Activated B cell treated with CpG ODN at 0.5 μM for 24 hours (primary cell): ENCODE measurements at regions of chr3 and their contacts with region 1.

Region 1: GRCh38 chr3:40309418-40309924 is at the start of gene EIF1B:
- DNase-seq: peak; percentile 99
- ATAC-seq: peak; percentile 88
- H3K4me3 Mint-ChIP-seq: peak within 1 kb of the TSS; percentile 99
- H3K27ac Mint-ChIP-seq: peak within 1 kb of the TSS; percentile 99
- H3K4me1 Mint-ChIP-seq: peaks cover 35% of the 10 kb centered on the region
- H3K27me3 Mint-ChIP-seq: no peaks in the 10 kb centered on the region
- CTCF ChIP-seq: no peak
- total RNA-seq, gene EIF1B: 62.0 and 65.5 TPM in 2 replicates

Region 2: DNA sequence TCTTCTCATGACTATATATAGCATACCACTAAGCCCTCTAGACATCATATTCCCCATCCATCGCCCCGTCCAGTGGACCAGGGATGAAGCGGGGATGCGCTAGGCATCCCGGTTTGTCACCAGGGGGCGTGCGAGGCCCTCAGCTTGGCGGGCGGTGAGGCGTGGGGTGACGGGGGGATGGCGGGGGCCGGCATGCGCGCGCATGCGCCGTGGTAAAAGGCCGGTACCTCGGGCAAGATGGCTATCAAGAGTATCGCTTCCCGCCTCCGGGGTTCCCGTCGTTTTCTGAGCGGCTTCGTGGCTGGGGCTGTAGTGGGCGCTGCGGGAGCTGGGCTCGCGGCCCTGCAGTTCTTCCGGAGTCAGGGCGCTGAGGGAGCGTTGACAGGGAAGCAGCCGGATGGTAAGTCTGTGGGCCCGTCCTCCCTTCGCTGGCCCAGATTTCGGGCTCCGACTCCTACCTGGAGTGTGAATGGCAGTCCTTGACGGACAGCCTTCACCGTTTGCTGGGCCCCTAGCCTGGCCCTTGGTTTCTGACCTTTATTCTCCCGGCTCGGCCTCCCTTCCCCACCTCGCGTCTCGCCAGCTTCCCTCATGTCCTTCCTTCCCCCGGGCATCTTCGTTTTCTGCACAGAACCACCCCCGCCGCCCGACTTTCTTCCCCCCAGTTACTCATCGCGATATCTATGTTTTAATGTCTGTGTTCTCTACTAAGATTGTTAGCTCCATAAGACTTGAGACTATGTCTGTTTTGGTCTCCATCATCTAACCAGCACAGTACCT is 1813.2 kb before region 1 on chr3 and contains the start of gene EXOG:
- CTCF ChIA-PET with region 1: no interaction called
- POLR2A ChIA-PET with region 1: no interaction called
- intact Hi-C with region 1: loop called (anchors 5 kb)
- DNase-seq: peak; percentile 88
- ATAC-seq: peak; percentile 96
- H3K4me3 Mint-ChIP-seq: peak within 1 kb of the TSS; percentile 98
- H3K27ac Mint-ChIP-seq: peak within 1 kb of the TSS; percentile 88
- H3K4me1 Mint-ChIP-seq: peaks cover 8% of the 10 kb centered on the region
- H3K27me3 Mint-ChIP-seq: no peaks in the 10 kb centered on the region
- CTCF ChIP-seq: peak; percentile 97
- total RNA-seq, gene EXOG: 26.8 and 32.3 TPM in 2 replicates

Region 3: DNA sequence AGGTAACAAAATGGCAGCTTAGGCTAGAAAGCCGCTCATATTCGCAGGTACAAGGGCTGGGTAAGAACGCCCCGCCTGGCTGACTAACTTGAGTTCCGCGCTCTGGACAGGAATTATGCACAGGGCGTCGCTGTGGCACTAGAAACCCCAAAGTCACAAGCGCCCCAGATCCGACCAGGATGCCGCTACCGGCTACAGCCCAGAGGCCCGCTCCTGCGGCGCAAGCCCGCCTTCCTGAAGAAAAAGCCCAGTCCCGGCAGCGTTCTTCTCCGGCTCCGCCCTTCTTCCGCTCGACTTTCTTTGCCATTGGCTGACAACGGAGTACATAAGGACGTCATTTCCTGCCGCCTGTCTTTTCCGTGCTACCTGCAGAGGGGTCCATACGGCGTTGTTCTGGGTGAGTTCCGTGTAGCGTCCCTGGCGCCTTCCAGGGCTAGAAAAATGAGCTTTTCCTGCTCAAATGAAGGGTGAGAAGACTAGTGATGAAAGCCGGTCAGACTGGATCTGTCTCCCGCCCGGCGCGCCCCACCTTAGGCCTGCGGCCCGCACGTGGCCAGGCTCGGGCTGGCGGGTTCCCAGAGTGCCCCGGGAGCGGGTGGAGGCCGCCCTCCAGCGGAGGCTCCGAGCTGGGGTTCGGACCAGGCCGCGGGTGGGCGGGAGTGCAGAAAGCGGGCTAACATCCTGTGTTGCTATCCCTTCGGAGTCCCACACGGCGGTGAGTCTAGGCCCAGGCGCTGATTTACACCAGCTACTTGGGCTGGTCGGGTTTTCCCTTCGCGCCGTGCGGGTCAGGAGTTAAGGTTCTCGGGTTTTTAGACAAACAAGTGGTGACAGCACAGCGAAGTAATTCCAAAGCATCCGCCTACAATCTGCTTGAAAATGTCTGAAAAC is 902.9 kb before region 1 on chr3 and contains the start of gene RPSA:
- CTCF ChIA-PET with region 1: no interaction called
- POLR2A ChIA-PET with region 1: no interaction called
- intact Hi-C with region 1: loop called (anchors 1 kb)
- DNase-seq: peak; percentile 80
- ATAC-seq: peak; percentile 90
- H3K4me3 Mint-ChIP-seq: peak within 1 kb of the TSS; percentile 94
- H3K27ac Mint-ChIP-seq: peak within 1 kb of the TSS; percentile 96
- H3K4me1 Mint-ChIP-seq: peaks cover 48% of the 10 kb centered on the region
- H3K27me3 Mint-ChIP-seq: no peaks in the 10 kb centered on the region
- CTCF ChIP-seq: no peak
- total RNA-seq, gene RPSA: 2,697 and 2,952 TPM in 2 replicates

Region 4: DNA sequence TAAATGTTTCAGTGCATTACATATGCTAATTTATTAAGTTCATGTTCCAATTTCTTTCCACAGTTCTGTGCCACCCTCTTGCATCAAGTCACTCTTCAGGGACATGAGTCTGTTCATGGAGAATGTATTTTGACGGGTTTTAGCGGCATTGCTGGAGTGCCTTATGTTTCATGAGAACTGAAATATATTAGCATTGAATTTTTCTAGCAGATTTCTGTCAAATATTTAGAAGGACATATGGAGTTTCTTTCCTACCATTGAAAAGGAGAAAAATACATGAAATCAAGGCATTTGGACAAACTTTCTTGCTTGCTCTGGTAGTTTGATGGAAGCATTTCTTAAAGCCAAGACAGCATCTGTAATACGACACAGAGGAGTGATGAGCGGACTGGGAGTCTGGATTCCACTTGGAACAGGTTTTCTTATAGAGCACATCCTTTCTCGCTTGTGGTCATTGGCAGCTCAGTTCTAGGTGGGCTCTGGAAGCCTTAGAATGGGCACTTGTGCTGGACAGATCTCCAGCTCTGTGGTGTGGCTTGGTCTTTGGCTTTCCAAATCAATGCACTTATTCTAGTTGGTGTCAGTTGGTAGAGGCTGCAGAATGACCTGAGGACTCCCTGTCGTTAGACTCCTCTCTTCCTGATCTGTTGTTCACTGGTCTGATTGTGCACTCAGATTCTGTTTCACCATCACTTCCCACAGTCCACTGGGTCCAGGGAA is 84.5 kb before region 1 on chr3:
- CTCF ChIA-PET with region 1: no interaction called
- POLR2A ChIA-PET with region 1: no interaction called
- intact Hi-C with region 1: no loop called
- DNase-seq: no peak
- ATAC-seq: no peak
- H3K4me3 Mint-ChIP-seq: no peak overlapping the region
- H3K27ac Mint-ChIP-seq: no peak overlapping the region
- H3K4me1 Mint-ChIP-seq: peaks cover 5% of the 10 kb centered on the region
- H3K27me3 Mint-ChIP-seq: no peaks in the 10 kb centered on the region
- CTCF ChIP-seq: no peak

Region 5: GRCh38 chr3:40337136-40338108 is 28.0 kb after region 1 on chr3:
- CTCF ChIA-PET with region 1: no interaction called
- POLR2A ChIA-PET with region 1: no interaction called
- intact Hi-C with region 1: no loop called
- DNase-seq: no peak
- ATAC-seq: no peak
- H3K4me3 Mint-ChIP-seq: no peak overlapping the region
- H3K27ac Mint-ChIP-seq: no peak overlapping the region
- H3K4me1 Mint-ChIP-seq: no peaks in the 10 kb centered on the region
- H3K27me3 Mint-ChIP-seq: peaks cover 4% of the 10 kb centered on the region
- CTCF ChIP-seq: no peak

Region 6: DNA sequence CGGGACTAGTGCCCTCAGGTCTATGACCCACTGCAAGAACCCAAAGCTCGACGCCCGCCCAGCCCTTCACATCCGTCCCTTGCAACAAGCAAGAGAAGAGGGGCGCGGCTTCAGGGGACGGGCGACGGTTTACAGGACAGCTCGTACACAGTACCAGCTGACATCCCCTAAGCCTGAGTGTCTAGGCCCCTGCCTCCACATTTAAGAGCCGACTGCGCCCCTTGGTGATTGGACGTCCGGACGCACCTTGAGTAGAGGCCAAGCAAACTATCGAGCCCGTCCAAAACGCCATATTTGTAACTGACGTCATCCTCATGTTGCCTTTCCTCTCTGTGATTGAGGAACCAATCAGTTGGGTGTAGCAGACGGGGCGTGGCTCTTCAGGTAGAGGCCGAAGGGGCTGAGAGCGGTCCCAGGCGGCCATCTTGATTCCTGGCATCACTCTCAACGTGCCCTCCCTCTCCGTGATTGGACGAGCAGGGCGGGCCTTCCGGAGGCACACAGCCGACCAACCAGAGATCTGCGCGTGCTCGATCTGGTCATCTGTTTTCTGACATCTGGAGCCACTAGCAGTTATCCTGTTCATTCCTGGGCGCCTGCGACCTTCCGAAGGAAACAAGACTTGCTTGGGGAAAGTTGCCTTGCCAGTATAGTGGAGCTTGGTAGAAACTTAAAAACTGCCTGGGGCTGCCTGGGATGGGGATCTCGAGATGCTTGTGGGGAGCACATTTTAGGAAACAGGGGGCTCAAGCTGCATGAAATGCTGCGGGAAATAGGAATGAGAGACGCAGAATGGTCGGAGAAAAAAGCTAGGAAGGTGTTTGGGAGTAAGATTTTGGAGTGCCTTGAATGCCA is 143.6 kb after region 1 on chr3:
- CTCF ChIA-PET with region 1: interaction called, 7 read pairs
- POLR2A ChIA-PET with region 1: interaction called, 12 read pairs
- intact Hi-C with region 1: loop called (anchors 1 kb)
- DNase-seq: peak; percentile 81
- ATAC-seq: peak; percentile 92
- H3K4me3 Mint-ChIP-seq: peak overlapping the region; percentile 96
- H3K27ac Mint-ChIP-seq: peak overlapping the region; percentile 98
- H3K4me1 Mint-ChIP-seq: peaks cover 36% of the 10 kb centered on the region
- H3K27me3 Mint-ChIP-seq: no peaks in the 10 kb centered on the region
- CTCF ChIP-seq: no peak

Region 7: GRCh38 chr3:40524568-40525285 is 215.3 kb after region 1 on chr3 and contains the start of gene ZNF621:
- CTCF ChIA-PET with region 1: no interaction called
- POLR2A ChIA-PET with region 1: interaction called, 8 read pairs
- intact Hi-C with region 1: loop called (anchors 1 kb)
- DNase-seq: peak; percentile 88
- ATAC-seq: peak; percentile 99
- H3K4me3 Mint-ChIP-seq: peak within 1 kb of the TSS; percentile 93
- H3K27ac Mint-ChIP-seq: peak within 1 kb of the TSS; percentile 91
- H3K4me1 Mint-ChIP-seq: peaks cover 18% of the 10 kb centered on the region
- H3K27me3 Mint-ChIP-seq: no peaks in the 10 kb centered on the region
- CTCF ChIP-seq: no peak
- total RNA-seq, gene ZNF621: 20.2 and 25.8 TPM in 2 replicates